ENCODE measurements at regions of chr3 and their contacts with region 1.

Region 1: GRCh38 chr3:114597013-114597412 is 303.2 kb downstream of the TIGIT start:
- DNase-seq: no peak
- ATAC-seq: no peak
- H3K4me3 ChIP-seq: no peak overlapping the region
- H3K27ac ChIP-seq: no peak overlapping the region
- H3K4me1 ChIP-seq: no peaks in the 10 kb centered on the region; the same call in 1 of the 2 replicates
- H3K27me3 ChIP-seq: no peaks in the 10 kb centered on the region
- CTCF ChIP-seq: no peak
- EP300 ChIP-seq: no peak
- POLR2A ChIP-seq: no peak
- RAD21 ChIP-seq: no peak

Region 2: GRCh38 chr3:114393367-114394072 is 203.5 kb before region 1 on chr3:
- CTCF ChIA-PET with region 1: no interaction called
- POLR2A ChIA-PET with region 1: no interaction called
- RAD21 ChIA-PET with region 1: no interaction called
- SMC1A ChIA-PET with region 1: no interaction called
- in situ Hi-C with region 1: no loop called
- intact Hi-C with region 1: loop called (anchors 10 kb)
- DNase-seq: no peak
- ATAC-seq: no peak
- H3K4me3 ChIP-seq: no peak overlapping the region
- H3K27ac ChIP-seq: no peak overlapping the region
- H3K4me1 ChIP-seq: no peaks in the 10 kb centered on the region
- H3K27me3 ChIP-seq: no peaks in the 10 kb centered on the region
- CTCF ChIP-seq: no peak
- EP300 ChIP-seq: no peak
- POLR2A ChIP-seq: no peak
- RAD21 ChIP-seq: no peak

Region 3: DNA sequence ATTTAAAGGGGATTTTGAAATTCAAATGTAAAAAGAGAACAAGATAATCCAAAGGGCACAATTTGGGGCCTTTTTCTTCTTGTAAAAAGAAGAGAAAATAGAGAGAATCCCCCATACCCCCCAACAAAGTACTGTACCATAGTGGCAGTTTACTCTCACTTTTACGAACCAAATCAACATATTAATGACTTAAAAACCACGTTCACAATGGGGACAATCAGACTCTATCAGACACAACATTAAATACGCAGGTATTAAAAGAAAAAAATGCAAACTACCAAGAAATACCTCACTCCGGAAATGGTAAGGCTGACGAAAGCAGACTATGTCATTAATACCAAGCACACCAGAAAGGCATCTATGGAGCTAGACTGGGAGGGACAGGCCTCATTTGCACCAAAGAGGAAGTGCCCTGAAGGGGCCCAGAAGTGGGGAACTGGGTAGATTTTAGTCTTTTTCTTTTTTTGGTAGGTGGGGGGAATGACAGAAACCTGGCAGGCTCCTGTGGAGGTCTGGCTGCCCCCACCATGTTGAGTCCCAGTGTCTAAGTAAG is 168.9 kb before region 1 on chr3:
- CTCF ChIA-PET with region 1: no interaction called
- POLR2A ChIA-PET with region 1: no interaction called
- RAD21 ChIA-PET with region 1: no interaction called
- SMC1A ChIA-PET with region 1: no interaction called
- in situ Hi-C with region 1: no loop called
- intact Hi-C with region 1: no loop called
- DNase-seq: no peak
- ATAC-seq: peak; percentile 98
- H3K4me3 ChIP-seq: 0 out of 2 replicates have a peak overlapping the region, but pooled peaks have one; percentile 51
- H3K27ac ChIP-seq: peak overlapping the region; percentile 72
- H3K4me1 ChIP-seq: peaks cover 7% of the 10 kb centered on the region
- H3K27me3 ChIP-seq: no peaks in the 10 kb centered on the region
- CTCF ChIP-seq: no peak
- EP300 ChIP-seq: peak in 1 of 2 experiments; percentile 18; a peak in 1 of 4 replicates
- POLR2A ChIP-seq: no peak
- RAD21 ChIP-seq: no peak

Region 4: DNA sequence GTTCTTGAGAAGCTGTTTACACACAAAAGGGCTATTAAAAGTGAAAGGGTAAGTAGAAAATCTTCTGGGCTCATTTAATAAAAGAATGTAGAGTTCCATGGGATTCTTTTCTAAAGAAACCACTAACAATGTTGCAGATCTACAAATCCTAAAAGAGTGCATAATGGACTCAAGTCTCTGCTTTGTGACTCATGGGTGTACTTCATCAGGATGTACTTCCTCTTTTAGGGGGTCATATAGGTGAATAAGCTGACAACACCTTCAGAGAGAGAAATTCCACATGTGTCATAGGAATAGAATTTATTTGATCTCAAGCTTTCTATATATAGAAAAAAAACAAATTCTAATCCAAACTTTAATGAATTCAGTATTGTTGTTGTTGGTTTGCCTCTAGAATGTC is 52.3 kb after region 1 on chr3:
- CTCF ChIA-PET with region 1: no interaction called
- POLR2A ChIA-PET with region 1: no interaction called
- RAD21 ChIA-PET with region 1: no interaction called
- SMC1A ChIA-PET with region 1: no interaction called
- in situ Hi-C with region 1: no loop called
- intact Hi-C with region 1: no loop called
- DNase-seq: no peak
- ATAC-seq: peak; percentile 60
- H3K4me3 ChIP-seq: no peak overlapping the region
- H3K27ac ChIP-seq: no peak overlapping the region
- H3K4me1 ChIP-seq: no peaks in the 10 kb centered on the region
- H3K27me3 ChIP-seq: no peaks in the 10 kb centered on the region
- CTCF ChIP-seq: no peak
- EP300 ChIP-seq: no peak
- POLR2A ChIP-seq: no peak
- RAD21 ChIP-seq: no peak

Measured in GM12878 (cell line).